ENCODE measurements at regions of chr13 and their contacts with region 1.

Region 1: DNA sequence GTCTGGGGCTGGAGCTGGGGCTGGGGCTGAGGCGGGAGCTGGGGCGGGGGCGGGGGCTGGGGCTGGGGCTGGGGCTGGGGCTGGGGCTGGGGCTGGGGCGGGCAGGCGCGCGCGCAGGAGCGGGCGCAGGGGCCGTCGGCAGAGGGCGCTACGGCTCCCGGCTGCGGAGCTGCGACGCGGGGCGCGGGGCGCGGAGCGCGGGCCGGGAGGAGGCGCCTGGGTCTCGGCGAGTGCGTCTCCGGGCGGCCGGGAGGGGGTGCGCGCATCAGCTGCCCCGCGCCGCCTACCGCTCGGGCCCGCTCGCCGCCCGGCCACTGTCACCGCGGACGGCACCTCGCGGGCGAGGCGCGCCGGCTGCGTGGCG is 422 bp upstream of the MTUS2 start:
- DNase-seq: peak; percentile 38 to 88 (median 56)
- ATAC-seq: peak; percentile 74 to 93 (median 90)
- H3K4me3 ChIP-seq: peak overlapping the region in 2 of 4 donors; percentile 32 to 44
- H3K27ac ChIP-seq: no peak overlapping the region
- H3K4me1 ChIP-seq: no peaks in the 10 kb centered on the region
- H3K27me3 ChIP-seq: peaks cover 0 to 16% (median 5%) of the 10 kb centered on the region in 4 donors
- CTCF ChIP-seq: no peak

Region 2: GRCh38 chr13:29362849-29363604 is 543.3 kb after region 1 on chr13:
- intact Hi-C with region 1: loop called in 1 of 3 experiments (anchors 10 kb)
- DNase-seq: peak in 3 of 6 donors; percentile 15 to 41 (median 31)
- ATAC-seq: peak; percentile 69 to 95 (median 94)
- H3K4me3 ChIP-seq: no peak overlapping the region
- H3K27ac ChIP-seq: no peak overlapping the region
- H3K4me1 ChIP-seq: no peaks in the 10 kb centered on the region
- H3K27me3 ChIP-seq: no peaks in the 10 kb centered on the region
- CTCF ChIP-seq: peak; percentile 71 to 90 (median 87)

Measured in pancreas (tissue), 10 donors.